Activated B cell treated with CpG ODN at 0.5 μM for 24 hours (primary cell): ENCODE measurements at regions of chr3 and their contacts with region 1.

Region 1: DNA sequence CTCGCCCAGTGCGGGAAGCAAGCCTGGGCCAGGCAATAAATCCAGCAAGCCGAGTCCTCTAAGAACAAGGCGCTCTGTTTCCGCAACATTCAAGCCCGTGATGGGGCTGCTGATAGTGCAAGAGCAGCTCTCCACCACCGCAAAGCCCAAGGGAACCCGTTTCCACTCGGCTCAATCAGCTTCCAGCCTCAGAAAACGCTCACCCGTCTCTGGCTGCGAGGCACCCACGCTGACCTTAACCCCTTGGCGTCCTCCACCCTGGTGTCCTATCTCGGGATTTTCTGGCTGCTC is 17.8 kb downstream of the SPATA12 start:
- DNase-seq: peak; percentile 65
- ATAC-seq: peak; percentile 85
- H3K4me3 Mint-ChIP-seq: peak overlapping the region; percentile 78
- H3K27ac Mint-ChIP-seq: peak overlapping the region; percentile 62
- H3K4me1 Mint-ChIP-seq: peaks cover 20% of the 10 kb centered on the region
- H3K27me3 Mint-ChIP-seq: peaks cover 50% of the 10 kb centered on the region
- CTCF ChIP-seq: no peak

Region 2: GRCh38 chr3:56059731-56060130 is 1018.6 kb before region 1 on chr3:
- CTCF ChIA-PET with region 1: no interaction called
- POLR2A ChIA-PET with region 1: no interaction called
- intact Hi-C with region 1: no loop called
- DNase-seq: no peak
- ATAC-seq: no peak
- H3K4me3 Mint-ChIP-seq: no peak overlapping the region
- H3K27ac Mint-ChIP-seq: no peak overlapping the region
- H3K4me1 Mint-ChIP-seq: no peaks in the 10 kb centered on the region
- H3K27me3 Mint-ChIP-seq: no peaks in the 10 kb centered on the region
- CTCF ChIP-seq: no peak

Region 3: GRCh38 chr3:57019057-57019456 is 59.2 kb before region 1 on chr3:
- CTCF ChIA-PET with region 1: interaction called, 4 read pairs
- POLR2A ChIA-PET with region 1: no interaction called
- intact Hi-C with region 1: loop called (anchors 2 kb)
- DNase-seq: peak; percentile 18
- ATAC-seq: peak; percentile 97
- H3K4me3 Mint-ChIP-seq: peak overlapping the region; percentile 64
- H3K27ac Mint-ChIP-seq: peak overlapping the region; percentile 65
- H3K4me1 Mint-ChIP-seq: peaks cover 24% of the 10 kb centered on the region
- H3K27me3 Mint-ChIP-seq: peaks cover 5% of the 10 kb centered on the region
- CTCF ChIP-seq: no peak

Region 4: DNA sequence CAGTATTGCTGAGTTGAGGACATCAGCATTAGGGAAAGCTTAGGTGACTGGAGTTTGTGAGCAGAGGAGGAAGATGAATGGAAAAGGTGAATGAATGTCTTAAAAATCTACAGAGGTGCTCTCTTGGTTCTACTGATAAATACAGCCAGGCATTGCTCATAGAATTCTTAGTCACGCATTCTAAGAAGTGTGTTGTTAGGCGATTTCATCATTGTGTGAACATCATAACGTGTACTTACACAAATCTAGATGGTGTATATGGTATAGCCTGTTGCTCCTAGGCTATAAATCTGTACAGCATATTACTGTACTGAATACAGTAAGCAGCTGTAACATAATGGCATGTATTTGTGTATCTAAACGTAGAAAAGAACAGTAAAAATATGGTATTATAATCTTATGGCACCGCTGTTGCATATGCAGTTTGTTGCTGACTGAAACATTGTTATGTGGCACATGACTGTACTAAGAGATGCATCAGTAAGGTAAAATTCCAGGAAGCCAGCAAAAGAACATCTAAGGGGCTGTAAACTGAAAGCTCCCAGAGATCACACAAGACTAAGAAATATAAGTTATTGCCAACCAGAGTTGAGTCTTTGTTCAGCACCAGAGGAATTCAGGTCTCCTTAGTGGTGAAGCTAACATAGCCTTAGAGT is 257.1 kb after region 1 on chr3:
- CTCF ChIA-PET with region 1: no interaction called
- POLR2A ChIA-PET with region 1: no interaction called
- intact Hi-C with region 1: no loop called
- DNase-seq: no peak
- ATAC-seq: no peak
- H3K4me3 Mint-ChIP-seq: no peak overlapping the region
- H3K27ac Mint-ChIP-seq: no peak overlapping the region
- H3K4me1 Mint-ChIP-seq: no peaks in the 10 kb centered on the region
- H3K27me3 Mint-ChIP-seq: peaks cover 12% of the 10 kb centered on the region
- CTCF ChIP-seq: no peak